Naive thymus-derived CD4-positive, alpha-beta T cell (primary cell): ENCODE measurements at regions of chr10 and their contacts with region 1.

Region 1: DNA sequence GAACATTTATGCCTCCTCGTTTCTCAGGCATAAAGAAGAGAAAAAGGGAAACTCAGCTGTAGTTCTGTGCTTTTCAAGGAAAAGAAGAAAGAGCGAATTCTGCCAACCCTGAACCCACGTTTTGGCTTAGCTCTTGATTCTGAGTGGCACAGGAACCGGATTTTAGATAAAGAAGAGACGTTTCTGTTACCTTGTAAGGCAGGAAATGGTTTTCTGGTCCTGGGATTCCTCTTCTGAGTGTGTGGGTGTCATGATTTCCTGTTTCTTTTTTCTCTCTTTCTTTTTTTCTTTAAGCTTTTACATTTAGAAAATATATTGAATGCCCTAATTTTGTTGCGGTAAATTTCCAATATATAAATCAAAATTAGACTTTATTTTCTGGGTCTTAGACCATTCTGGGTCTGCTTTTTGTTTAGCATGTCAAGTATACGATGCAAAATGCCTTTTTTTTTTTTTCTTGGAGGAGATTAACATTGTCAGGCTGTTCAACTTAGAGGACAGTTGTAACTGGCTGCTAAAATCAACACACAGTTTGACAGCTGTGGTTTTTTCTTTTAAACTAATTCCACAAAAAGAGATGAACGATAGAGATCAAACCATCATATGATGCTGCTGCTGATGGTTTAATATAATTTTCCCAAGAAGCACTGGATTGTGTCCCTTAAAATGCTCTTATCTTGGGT is 190.8 kb downstream of the GATA3 start:
- DNase-seq: peak in 7 of 9 donors; percentile 45 to 75 (median 67)
- ATAC-seq: peak; percentile 86
- H3K4me3 ChIP-seq: no peak overlapping the region
- H3K4me3 Mint-ChIP-seq: peak overlapping the region; percentile 56 to 86 (median 78)
- H3K27ac ChIP-seq: peak overlapping the region; percentile 61
- H3K27ac Mint-ChIP-seq: peak overlapping the region; percentile 80 to 96 (median 91)
- H3K4me1 ChIP-seq: peaks cover 27 to 32% of the 10 kb centered on the region in 2 donors
- H3K4me1 Mint-ChIP-seq: peaks cover 20 to 79% (median 55%) of the 10 kb centered on the region in 7 donors
- H3K27me3 ChIP-seq: no peaks in the 10 kb centered on the region
- H3K27me3 Mint-ChIP-seq: no peaks in the 10 kb centered on the region

Region 2: DNA sequence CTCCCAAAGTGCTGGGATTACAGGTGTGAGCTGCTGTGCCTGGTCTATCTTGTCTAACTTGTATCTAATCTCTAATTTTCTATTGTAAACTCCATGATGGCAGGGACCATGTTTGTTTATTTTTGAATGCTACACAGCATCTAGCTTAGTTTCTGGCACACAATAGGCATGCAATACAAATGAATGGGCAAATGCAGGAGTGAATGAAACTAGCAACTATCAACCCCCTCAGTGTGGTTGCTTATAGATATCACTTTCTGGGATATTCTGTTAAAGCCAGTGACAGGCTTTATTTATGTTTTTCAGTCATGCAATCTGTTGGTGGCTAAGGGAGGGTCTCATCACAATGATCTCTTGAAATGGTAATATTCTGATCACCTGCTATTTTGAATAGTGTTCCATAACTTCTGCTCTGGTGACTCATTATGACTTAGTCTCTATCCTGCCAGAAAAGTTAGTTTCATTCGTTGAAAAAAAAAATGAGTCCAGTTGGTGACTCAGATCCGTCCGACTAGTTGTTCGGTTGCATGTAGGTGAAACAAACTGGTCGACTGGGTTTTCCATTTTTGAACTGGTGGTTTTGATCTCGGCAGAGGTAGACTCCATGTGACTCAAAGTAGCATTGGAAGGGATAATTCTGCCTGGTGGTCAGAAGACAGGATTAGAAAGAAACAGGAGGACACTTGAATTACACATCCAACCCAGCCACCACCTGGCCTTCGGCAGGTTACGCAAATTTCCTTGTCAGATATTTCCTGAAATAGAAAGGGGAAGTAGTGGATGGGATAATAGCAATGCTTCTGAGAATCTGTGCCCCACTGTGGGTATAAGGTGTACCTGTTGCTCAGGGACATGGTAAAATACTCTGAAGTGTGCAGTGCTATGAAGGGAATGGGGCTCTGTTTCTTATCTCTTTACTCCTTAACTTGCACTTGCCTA is 114.0 kb before region 1 on chr10:
- CTCF ChIA-PET with region 1: no interaction called
- POLR2A ChIA-PET with region 1: no interaction called
- intact Hi-C with region 1: loop called (anchors 1 to 2 kb)
- DNase-seq: peak in 1 of 9 donors; percentile 56
- ATAC-seq: no peak
- H3K4me3 ChIP-seq: no peak overlapping the region
- H3K4me3 Mint-ChIP-seq: peak overlapping the region in 1 of 10 donors; percentile 53
- H3K27ac ChIP-seq: no peak overlapping the region
- H3K27ac Mint-ChIP-seq: peak overlapping the region in 1 of 9 donors; percentile 73
- H3K4me1 ChIP-seq: peaks cover 0 to 2% of the 10 kb centered on the region in 2 donors
- H3K4me1 Mint-ChIP-seq: peaks cover 4 to 47% (median 14%) of the 10 kb centered on the region in 7 donors
- H3K27me3 ChIP-seq: no peaks in the 10 kb centered on the region
- H3K27me3 Mint-ChIP-seq: peaks cover 1 to 16% (median 10%) of the 10 kb centered on the region in 5 donors

Region 3: DNA sequence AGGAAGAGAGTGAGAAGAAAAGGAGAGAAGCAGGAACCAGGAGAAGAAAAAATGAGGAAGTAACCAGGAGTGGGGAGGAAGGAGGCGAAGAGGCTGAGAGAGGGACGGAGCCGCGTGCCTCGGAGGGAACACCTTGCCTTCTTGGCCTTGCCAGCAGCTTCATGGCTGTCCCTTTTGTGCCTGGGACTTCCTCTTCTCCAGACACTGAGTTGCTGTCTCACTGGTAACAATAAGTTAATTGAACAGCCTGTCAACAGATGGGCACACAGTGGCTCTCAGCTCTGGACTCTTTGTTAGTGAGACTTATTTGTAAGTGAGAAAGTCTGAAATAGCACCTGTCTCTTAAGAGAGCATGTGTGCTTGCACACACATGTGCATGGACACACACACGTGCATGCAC is 107.5 kb before region 1 on chr10:
- CTCF ChIA-PET with region 1: no interaction called
- POLR2A ChIA-PET with region 1: no interaction called
- intact Hi-C with region 1: loop called (anchors 1 to 2 kb)
- DNase-seq: peak in 1 of 9 donors; percentile 25
- ATAC-seq: peak; percentile 40
- H3K4me3 ChIP-seq: peak overlapping the region; percentile 63
- H3K4me3 Mint-ChIP-seq: peak overlapping the region; percentile 84 to 95 (median 88)
- H3K27ac ChIP-seq: peak overlapping the region; percentile 72
- H3K27ac Mint-ChIP-seq: peak overlapping the region; percentile 86 to 98 (median 93)
- H3K4me1 ChIP-seq: peaks cover 3 to 18% of the 10 kb centered on the region in 2 donors
- H3K4me1 Mint-ChIP-seq: peaks cover 24 to 65% (median 39%) of the 10 kb centered on the region in 7 donors
- H3K27me3 ChIP-seq: no peaks in the 10 kb centered on the region
- H3K27me3 Mint-ChIP-seq: peaks cover 0 to 14% (median 10%) of the 10 kb centered on the region in 5 donors

Region 4: DNA sequence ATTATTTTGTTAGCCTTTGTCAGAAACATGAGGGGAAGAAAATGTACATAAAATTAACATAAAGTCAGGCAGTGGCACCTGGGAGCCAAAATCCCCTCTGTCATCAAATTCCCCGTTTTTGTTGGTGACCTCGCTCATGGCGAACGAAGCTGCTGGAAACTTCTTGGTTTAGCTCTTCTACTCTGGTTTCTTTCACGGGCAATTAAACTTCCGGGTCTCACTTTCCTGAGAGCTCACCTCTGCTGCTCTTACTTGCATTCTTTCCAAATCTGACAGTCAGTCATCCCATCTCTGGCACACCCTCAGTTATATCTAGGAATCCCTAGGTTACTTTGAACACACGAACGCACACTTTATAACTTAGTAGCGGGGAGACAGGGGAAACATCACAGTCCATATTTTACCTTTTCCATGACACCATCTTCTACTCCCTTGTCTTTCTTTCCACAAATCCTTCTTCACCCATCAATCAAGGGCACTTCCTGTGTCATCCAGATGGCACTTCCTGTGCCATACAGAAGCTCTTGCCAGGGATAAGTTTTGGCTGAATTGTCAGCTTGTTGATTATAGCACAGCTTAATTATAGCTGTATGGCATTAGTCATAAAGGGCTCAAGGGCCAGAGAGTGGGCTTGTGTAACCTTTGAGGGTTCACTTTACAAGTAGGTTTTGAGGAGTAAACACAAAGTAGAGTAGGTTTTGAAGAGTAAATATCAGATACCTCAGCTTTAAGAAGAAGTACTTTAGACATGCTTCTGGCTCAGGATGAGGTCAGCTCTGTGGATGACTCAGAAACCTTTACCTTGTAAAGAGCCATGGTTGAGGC is 85.7 kb before region 1 on chr10:
- CTCF ChIA-PET with region 1: no interaction called
- POLR2A ChIA-PET with region 1: no interaction called
- intact Hi-C with region 1: no loop called
- DNase-seq: no peak
- ATAC-seq: no peak
- H3K4me3 ChIP-seq: no peak overlapping the region
- H3K4me3 Mint-ChIP-seq: no peak overlapping the region
- H3K27ac ChIP-seq: no peak overlapping the region
- H3K27ac Mint-ChIP-seq: peak overlapping the region in 1 of 9 donors; percentile 25
- H3K4me1 ChIP-seq: no peaks in the 10 kb centered on the region
- H3K4me1 Mint-ChIP-seq: peaks cover 0 to 5% (median 0%) of the 10 kb centered on the region in 7 donors
- H3K27me3 ChIP-seq: no peaks in the 10 kb centered on the region
- H3K27me3 Mint-ChIP-seq: peaks cover 0 to 23% (median 0%) of the 10 kb centered on the region in 5 donors

Region 5: DNA sequence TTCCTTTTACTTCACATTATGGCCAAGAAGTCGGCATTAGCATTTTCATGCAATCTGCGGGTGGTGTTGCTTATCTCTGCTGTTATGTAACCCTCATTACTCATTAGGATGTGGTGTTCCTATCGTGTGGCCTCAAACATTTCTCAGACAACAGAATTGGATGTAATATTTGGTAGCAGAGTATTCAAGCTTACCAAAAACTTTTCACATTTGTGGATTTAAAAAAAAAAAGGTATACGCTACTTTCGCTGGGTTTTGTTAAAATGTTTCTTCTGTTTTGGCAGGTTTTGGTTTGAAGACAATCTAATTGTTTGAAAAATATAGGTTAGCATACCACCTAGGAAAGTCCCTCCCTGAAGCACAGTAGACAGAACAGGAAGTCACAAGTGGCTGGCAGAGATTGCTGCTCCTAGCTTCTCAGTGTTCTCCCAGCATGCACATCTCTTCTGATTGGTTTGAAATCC is 62.0 kb before region 1 on chr10:
- CTCF ChIA-PET with region 1: no interaction called
- POLR2A ChIA-PET with region 1: no interaction called
- intact Hi-C with region 1: loop called in 1 of 2 experiments (anchors 2 kb)
- DNase-seq: peak in 7 of 9 donors; percentile 38 to 67 (median 57)
- ATAC-seq: peak; percentile 95
- H3K4me3 ChIP-seq: no peak overlapping the region
- H3K4me3 Mint-ChIP-seq: peak overlapping the region; percentile 14 to 82 (median 56)
- H3K27ac ChIP-seq: peak overlapping the region; percentile 44
- H3K27ac Mint-ChIP-seq: peak overlapping the region; percentile 4 to 90 (median 80)
- H3K4me1 ChIP-seq: peaks cover 14 to 20% of the 10 kb centered on the region in 2 donors
- H3K4me1 Mint-ChIP-seq: peaks cover 18 to 42% (median 37%) of the 10 kb centered on the region in 7 donors
- H3K27me3 ChIP-seq: no peaks in the 10 kb centered on the region
- H3K27me3 Mint-ChIP-seq: peaks cover 0 to 20% (median 4%) of the 10 kb centered on the region in 5 donors

Region 6: GRCh38 chr10:8350351-8350967 is 105.2 kb after region 1 on chr10:
- CTCF ChIA-PET with region 1: no interaction called
- POLR2A ChIA-PET with region 1: no interaction called
- intact Hi-C with region 1: no loop called
- DNase-seq: no peak
- ATAC-seq: no peak
- H3K4me3 ChIP-seq: no peak overlapping the region
- H3K4me3 Mint-ChIP-seq: no peak overlapping the region
- H3K27ac ChIP-seq: no peak overlapping the region
- H3K27ac Mint-ChIP-seq: no peak overlapping the region
- H3K4me1 ChIP-seq: no peaks in the 10 kb centered on the region
- H3K4me1 Mint-ChIP-seq: peaks cover 0 to 1% (median 0%) of the 10 kb centered on the region in 7 donors
- H3K27me3 ChIP-seq: no peaks in the 10 kb centered on the region
- H3K27me3 Mint-ChIP-seq: peaks cover 0 to 18% (median 0%) of the 10 kb centered on the region in 5 donors

Region 7: GRCh38 chr10:8473205-8473604 is 227.9 kb after region 1 on chr10:
- CTCF ChIA-PET with region 1: no interaction called
- POLR2A ChIA-PET with region 1: no interaction called
- intact Hi-C with region 1: loop called in 1 of 2 experiments (anchors 5 kb)
- DNase-seq: peak in 7 of 9 donors; percentile 8 to 61 (median 36)
- ATAC-seq: peak; percentile 51
- H3K4me3 ChIP-seq: no peak overlapping the region
- H3K4me3 Mint-ChIP-seq: no peak overlapping the region
- H3K27ac ChIP-seq: no peak overlapping the region
- H3K27ac Mint-ChIP-seq: no peak overlapping the region
- H3K4me1 ChIP-seq: no peaks in the 10 kb centered on the region
- H3K4me1 Mint-ChIP-seq: peaks cover 0 to 3% (median 0%) of the 10 kb centered on the region in 7 donors
- H3K27me3 ChIP-seq: no peaks in the 10 kb centered on the region
- H3K27me3 Mint-ChIP-seq: peaks cover 8 to 46% (median 25%) of the 10 kb centered on the region in 5 donors